ACHN (cell line): ENCODE measurements at regions of chr17 and their contacts with region 1.

Region 1: DNA sequence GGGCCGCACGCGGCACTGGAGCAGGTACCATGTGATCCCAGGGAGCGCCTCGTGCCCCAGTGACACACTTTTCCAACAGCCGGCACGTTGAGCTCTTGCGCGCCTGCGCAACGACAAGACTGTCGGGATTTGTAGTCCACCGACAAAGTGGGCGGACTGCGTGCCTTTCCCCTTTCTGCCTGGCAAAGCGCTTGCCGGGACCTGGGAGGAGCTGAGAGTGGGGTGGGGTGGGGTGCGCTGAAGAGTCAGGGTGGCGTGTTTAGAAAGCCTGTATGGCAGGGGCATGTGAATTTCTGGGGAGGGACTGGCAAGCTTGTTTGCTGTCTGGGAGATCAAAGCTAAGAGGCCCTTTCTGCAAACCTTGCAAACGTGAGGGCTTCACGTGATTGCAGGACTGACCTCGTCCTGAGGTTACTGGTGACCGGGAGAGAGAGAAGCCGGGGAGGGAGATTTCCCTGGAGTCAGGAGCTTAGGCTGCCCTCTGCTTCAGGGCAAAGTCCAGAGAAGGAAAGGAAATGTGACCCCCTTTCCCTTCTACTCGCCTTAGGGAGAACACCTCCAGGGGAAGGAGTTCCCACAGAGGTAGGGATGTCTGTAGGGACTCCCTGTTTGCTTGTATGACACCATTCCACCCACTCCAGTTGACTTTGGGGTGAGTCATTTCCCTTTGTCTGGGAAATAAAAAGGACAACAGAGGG is 429 bp upstream of the NR1D1 start:
- DNase-seq: peak; percentile 99

Region 2: DNA sequence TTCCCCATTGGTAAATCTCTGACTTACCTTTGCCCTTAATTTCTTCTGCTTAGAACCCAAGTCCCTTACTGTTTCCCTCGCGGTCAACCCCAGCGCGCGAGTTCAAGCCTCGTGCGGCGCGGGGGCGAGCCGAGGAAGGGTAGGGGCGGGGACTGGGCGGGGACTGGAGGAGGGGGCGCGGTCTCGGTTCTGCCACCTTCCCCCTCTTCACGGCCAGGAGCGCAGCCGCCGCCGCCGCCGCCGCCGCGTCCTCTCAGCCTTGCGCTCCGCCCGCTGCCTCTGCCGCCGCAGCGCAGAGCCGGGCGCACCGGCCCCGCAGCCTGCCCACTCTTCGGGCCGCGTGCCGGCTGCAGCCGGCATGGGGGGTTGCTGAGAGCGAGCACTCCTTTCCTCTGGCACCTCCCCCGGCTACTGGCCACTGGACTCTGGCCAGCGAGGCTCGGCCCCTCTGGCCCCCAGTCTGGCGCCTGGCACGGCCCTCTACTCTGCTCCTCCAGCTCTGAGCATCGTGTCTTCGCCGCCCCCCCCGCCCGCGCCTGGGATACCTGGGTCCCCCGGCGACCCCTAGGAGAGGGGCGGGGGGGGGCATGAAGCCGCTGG is 76.6 kb after region 1 on chr17 and contains the start of gene RAPGEFL1:
- in situ Hi-C with region 1: loop called (anchors 10 kb)
- DNase-seq: peak; percentile 70

Region 3: DNA sequence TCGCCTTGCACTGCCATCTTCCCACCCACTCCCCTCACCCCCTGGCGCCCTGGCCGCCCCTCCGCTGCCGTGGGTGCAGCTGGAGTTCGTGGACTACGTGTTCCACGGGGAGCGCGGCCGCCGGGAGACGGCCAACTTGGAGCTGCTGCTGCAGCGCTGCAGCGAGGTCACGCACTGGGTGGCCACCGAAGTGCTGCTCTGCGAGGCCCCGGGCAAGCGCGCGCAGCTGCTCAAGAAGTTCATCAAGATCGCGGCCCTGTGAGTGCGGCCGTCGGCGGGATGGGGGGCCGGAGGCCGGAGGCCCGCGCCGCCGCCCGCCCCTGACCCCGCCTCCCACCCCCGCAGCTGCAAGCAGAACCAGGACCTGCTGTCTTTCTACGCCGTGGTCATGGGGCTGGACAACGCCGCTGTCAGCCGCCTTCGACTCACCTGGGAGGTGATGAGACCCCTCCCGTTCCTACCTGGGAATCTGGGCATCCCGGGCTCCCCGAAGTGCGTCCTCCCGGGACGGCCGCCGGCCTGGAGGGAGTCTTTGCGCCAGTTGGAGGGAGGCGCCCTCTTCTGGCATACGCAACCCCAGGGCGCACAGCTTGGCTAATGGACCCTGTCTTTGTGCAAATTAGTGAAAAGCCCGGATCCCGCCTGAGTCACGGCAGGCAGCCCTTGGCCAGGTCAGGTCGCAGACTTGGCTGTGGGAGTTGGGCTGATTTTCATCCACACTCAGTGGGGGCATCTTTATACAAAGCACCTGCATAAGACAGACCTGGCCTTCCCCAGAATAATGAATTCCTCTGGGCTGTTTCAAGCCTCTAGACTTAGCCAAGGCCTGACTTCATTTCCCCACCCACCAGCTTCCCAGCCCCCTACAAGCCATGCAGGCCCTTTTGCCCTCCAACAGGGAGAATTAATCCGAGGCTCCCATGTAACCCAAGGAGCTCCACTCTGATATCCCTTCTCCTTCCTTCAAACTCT is 90.7 kb after region 1 on chr17:
- in situ Hi-C with region 1: no loop called
- DNase-seq: peak; percentile 89

Region 4: DNA sequence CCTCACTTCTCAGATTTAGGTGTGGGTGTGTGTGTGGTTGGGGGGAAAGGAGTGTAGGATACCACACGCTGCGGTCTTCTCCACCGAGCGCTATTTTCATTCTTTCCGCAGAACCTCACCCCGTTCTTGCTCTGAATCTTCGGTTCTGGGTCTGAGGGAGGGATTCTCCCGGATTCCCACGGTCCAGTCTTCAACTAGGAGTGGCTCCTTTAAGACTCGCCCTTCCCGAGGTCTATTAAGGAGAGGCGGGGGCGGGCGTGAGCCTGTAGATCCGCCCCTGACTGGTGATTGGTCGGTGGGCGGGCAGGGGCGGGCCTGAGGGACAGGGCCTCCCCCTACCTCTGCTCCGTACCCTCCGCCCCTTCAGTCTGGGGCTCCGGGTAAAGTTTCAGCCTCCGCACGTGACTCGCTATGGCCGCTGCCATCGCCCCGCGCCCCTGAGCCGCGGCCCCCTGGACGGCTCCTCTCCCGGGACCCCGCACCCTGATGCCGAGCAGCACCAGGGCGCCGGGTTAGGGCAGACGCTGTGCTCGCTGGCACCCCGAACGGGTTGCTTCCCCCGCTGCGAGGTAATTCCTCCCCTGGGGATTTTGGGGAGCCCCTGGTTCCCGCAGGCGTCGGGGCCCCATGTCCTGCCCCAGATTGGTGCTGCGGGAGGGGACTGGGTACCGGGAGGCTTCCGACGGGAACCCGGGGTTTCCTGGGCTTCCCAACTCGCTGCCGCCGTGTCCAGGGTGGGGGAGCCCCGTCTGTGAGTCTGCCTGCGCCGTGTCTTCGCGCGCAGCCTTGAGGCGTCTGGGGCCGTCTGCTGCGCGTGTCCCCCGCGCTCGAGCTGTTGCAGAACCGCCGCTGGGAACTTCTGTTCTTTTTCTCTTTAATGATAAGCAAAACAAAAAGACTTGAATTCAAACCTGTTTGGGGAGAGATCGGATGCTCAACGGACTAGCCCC is 217.3 kb after region 1 on chr17:
- in situ Hi-C with region 1: no loop called
- DNase-seq: peak; percentile 97